ENCODE measurements at regions of chr11 and their contacts with region 1.

Region 1: GRCh38 chr11:62771144-62772021 is at the start of gene TAF6L:
- DNase-seq: peak; percentile 98
- ATAC-seq: peak; percentile 87
- H3K4me3 Mint-ChIP-seq: peak within 1 kb of the TSS; percentile 85
- H3K27ac Mint-ChIP-seq: peak within 1 kb of the TSS; percentile 89
- H3K4me1 Mint-ChIP-seq: peaks cover 26% of the 10 kb centered on the region
- H3K27me3 Mint-ChIP-seq: no peaks in the 10 kb centered on the region
- total RNA-seq, gene TAF6L: 10.2 to 12.6 TPM

Region 2: DNA sequence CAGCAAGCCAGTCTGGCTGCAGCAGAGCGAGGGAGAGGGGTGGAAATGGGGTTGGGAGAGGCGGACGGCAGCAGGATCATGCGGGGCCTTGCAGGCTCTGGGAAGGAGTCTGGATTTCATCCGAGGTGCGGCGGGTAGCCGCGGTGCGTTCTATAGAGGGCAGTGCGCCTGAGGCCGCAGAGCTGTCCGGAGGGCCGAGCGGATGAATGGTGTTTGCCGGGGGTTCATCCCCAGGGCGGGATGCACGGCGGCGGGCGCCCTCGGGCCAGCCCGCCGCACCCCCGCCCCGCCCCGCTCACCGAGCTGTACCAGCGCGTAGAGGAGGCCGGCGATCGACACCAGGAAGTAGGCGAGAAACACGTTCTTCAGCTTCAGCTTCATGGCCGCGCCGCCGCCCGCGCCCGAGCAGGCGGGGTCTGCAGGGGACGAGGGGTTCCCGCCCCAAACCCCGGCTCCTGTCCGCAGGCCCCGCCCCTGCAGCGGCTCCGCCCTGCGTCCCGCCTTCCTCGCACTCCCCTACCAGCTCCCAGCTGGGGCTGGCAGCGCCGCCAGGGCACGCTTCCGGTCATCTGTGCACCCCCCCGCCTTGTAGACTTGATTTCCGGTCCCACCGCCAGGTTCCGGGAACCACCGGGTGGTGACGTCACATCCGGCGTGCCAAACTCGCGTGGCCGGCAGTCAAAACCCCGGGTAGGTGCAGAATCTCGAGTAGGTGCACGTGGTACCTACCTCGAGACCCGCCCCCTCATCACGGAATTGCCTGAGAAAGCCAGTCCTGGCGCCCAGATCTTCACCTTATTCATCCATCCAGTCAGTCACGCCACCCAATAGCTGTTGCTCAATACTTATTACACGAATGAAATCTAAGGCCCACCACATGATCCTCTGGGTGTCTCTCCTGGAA is 149.6 kb before region 1 on chr11 and contains the start of gene B3GAT3:
- CTCF ChIA-PET with region 1: no interaction called
- POLR2A ChIA-PET with region 1: no interaction called
- intact Hi-C with region 1: loop called in 1 of 2 experiments (anchors 1 kb)
- DNase-seq: peak; percentile 97
- ATAC-seq: peak; percentile 94
- H3K4me3 Mint-ChIP-seq: peak within 1 kb of the TSS; percentile 92
- H3K27ac Mint-ChIP-seq: peak within 1 kb of the TSS; percentile 94
- H3K4me1 Mint-ChIP-seq: peaks cover 29% of the 10 kb centered on the region
- H3K27me3 Mint-ChIP-seq: no peaks in the 10 kb centered on the region
- total RNA-seq, gene B3GAT3: 48.7 to 57.5 TPM

Region 3: DNA sequence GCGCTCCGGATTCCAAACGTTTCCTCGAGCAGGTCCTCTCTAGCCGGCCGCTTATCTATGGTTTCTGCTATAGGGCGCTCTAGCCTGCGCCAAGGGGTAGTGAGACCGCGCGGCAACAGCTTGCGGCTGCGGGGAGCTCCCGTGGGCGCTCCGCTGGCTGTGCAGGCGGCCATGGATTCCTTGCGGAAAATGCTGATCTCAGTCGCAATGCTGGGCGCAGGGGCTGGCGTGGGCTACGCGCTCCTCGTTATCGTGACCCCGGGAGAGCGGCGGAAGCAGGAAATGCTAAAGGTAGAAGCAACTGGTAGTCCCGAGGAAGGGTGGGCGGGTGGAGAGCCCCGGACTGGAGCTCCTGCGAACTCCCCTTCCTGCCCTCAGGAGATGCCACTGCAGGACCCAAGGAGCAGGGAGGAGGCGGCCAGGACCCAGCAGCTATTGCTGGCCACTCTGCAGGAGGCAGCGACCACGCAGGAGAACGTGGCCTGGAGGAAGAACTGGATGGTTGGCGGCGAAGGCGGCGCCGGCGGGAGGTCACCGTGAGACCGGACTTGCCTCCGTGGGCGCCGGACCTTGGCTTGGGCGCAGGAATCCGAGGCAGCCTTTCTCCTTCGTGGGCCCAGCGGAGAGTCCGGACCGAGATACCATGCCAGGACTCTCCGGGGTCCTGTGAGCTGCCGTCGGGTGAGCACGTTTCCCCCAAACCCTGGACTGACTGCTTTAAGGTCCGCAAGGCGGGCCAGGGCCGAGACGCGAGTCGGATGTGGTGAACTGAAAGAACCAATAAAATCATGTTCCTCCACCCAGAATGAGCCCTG is 99.6 kb before region 1 on chr11 and contains the starts of genes LBHD1 and UQCC3:
- CTCF ChIA-PET with region 1: interaction called, 3 read pairs
- POLR2A ChIA-PET with region 1: no interaction called
- intact Hi-C with region 1: loop called in 1 of 2 experiments (anchors 1 kb)
- DNase-seq: peak; percentile 86
- ATAC-seq: peak; percentile 88
- H3K4me3 Mint-ChIP-seq: peak within 1 kb of the TSS; percentile 91
- H3K27ac Mint-ChIP-seq: peak within 1 kb of the TSS; percentile 96
- H3K4me1 Mint-ChIP-seq: peaks cover 54% of the 10 kb centered on the region
- H3K27me3 Mint-ChIP-seq: no peaks in the 10 kb centered on the region
- total RNA-seq, gene LBHD1: 11.9 to 15.5 TPM
- total RNA-seq, gene UQCC3: 4.1 to 6.4 TPM

Region 4: DNA sequence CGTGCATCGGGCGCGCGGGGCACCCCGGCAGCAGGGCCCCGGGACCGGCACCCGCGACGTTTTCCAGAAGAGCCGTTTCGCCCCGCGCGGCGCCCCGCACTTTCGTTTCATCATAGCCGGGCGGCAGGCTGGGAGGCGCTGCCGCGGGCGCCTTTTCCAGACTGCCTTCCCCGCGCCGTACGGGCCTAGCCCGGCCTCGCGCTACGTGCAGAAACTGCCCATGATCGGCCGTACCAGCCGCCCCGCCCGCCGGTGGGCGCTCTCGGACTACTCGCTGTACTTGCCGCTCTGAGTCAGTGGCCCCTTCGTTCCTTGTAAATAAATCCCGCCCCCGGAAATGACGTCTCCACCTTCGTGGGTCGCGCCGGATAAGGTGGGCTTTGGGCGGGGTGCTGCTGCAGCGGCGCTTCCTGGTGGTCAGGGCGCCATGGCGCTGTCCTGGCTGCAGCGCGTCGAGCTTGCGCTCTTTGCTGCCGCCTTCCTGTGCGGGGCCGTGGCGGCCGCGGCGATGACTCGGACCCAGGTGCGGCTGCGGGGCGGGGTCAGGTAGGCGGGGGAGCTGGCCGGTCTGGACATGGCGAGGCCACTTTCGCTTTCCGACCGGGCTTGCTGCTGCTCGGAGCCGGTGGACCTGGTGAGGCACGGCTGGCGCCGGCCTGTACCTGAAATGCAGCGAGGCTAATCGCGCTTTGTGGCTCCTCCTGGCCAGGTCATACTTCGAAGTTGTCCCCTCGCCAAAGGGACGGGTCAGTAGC is 15.8 kb after region 1 on chr11 and contains the start of gene TMEM179B:
- CTCF ChIA-PET with region 1: interaction called, 75 read pairs
- POLR2A ChIA-PET with region 1: interaction called, 15 read pairs
- intact Hi-C with region 1: loop called (anchors 1 to 2 kb)
- DNase-seq: peak; percentile 99
- ATAC-seq: peak; percentile 63
- H3K4me3 Mint-ChIP-seq: peak within 1 kb of the TSS; percentile 90
- H3K27ac Mint-ChIP-seq: peak within 1 kb of the TSS; percentile 95
- H3K4me1 Mint-ChIP-seq: peaks cover 42% of the 10 kb centered on the region
- H3K27me3 Mint-ChIP-seq: no peaks in the 10 kb centered on the region
- total RNA-seq, gene TMEM179B: 19.5 to 35.9 TPM

Region 5: GRCh38 chr11:62805076-62805892 is 33.9 kb after region 1 on chr11 and contains the start of gene NXF1:
- CTCF ChIA-PET with region 1: interaction called, 3 read pairs
- POLR2A ChIA-PET with region 1: no interaction called
- intact Hi-C with region 1: loop called in 1 of 2 experiments (anchors 1 kb)
- DNase-seq: peak; percentile 97
- ATAC-seq: peak; percentile 79
- H3K4me3 Mint-ChIP-seq: peak within 1 kb of the TSS; percentile 99
- H3K27ac Mint-ChIP-seq: peak within 1 kb of the TSS; percentile 97
- H3K4me1 Mint-ChIP-seq: peaks cover 29% of the 10 kb centered on the region
- H3K27me3 Mint-ChIP-seq: no peaks in the 10 kb centered on the region
- total RNA-seq, gene NXF1: 89.5 to 97.6 TPM

Region 6: DNA sequence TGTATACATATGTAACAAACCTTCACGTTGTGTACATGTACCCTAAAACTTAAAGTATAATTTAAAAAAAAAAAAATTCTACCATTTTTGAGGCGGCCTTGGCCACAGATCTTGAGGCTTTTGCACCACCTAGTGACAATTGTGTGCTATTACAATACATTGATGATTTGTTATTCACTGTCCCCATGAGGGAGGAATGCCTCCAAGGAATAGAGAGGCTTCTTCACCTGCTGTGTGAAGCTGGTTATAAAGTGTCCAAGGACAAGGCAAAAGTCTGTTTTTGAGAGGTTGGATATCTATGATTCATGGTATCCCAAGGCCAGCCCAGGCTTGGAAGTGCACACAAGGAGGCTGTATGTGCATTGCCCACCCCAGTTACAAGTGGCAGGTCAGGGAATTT is 441.4 kb after region 1 on chr11:
- CTCF ChIA-PET with region 1: no interaction called
- POLR2A ChIA-PET with region 1: no interaction called
- intact Hi-C with region 1: no loop called
- DNase-seq: peak; percentile 26
- ATAC-seq: no peak
- H3K4me3 Mint-ChIP-seq: no peak overlapping the region
- H3K27ac Mint-ChIP-seq: no peak overlapping the region
- H3K4me1 Mint-ChIP-seq: no peaks in the 10 kb centered on the region
- H3K27me3 Mint-ChIP-seq: peaks cover 19% of the 10 kb centered on the region

Region 7: DNA sequence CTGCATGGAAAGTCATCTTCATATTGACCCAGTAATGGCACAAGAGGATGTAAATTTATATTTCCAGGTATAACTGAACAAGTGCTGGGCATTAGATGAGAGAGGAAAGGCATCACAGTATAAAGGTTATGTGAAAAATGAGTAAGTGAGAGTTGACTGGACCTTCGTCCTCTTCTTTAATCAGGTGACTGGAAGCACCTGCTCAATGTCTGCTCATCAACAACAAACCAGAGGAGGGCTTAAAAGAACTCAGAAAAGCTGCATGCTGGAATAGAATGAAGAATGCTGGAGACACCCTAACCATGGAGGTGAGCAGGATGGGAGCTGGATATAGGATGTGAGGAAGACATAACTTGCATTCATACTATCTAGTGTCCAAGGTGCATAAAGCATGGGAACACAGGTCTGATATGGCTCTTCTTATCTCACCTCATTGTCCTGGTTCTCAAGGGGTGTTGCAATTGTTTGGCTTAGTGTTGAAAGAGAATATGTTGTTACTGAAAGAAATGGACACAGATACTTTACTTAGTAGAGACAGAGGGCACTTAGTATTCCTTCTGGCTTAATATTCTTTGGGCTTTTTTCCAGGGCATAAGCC is 590.9 kb after region 1 on chr11:
- CTCF ChIA-PET with region 1: no interaction called
- POLR2A ChIA-PET with region 1: no interaction called
- intact Hi-C with region 1: no loop called
- DNase-seq: no peak
- ATAC-seq: no peak
- H3K4me3 Mint-ChIP-seq: no peak overlapping the region
- H3K27ac Mint-ChIP-seq: no peak overlapping the region
- H3K4me1 Mint-ChIP-seq: no peaks in the 10 kb centered on the region
- H3K27me3 Mint-ChIP-seq: peaks cover 44% of the 10 kb centered on the region